ENCODE measurements at regions of chr7 and their contacts with region 1.

Region 1: GRCh38 chr7:87219545-87220025 is at the start of gene TMEM243:
- DNase-seq: peak; percentile 88
- H3K4me3 ChIP-seq: peak within 1 kb of the TSS; percentile 95 to 99
- H3K27ac ChIP-seq: peak within 1 kb of the TSS; percentile 61 to 74
- H3K4me1 ChIP-seq: peaks cover 0 to 24% of the 10 kb centered on the region in 2 experiments; a peak in 2 of 4 replicates
- H3K27me3 ChIP-seq: no peaks in the 10 kb centered on the region
- CTCF ChIP-seq: peak; percentile 40
- EP300 ChIP-seq: 0 out of 4 replicates have a peak, but pooled peaks of 1 of the 2 experiments have one; percentile 6
- RAD21 ChIP-seq: no peak
- polyA plus RNA-seq, gene TMEM243: 31.1 and 36.5 TPM in 2 replicates

Region 2: DNA sequence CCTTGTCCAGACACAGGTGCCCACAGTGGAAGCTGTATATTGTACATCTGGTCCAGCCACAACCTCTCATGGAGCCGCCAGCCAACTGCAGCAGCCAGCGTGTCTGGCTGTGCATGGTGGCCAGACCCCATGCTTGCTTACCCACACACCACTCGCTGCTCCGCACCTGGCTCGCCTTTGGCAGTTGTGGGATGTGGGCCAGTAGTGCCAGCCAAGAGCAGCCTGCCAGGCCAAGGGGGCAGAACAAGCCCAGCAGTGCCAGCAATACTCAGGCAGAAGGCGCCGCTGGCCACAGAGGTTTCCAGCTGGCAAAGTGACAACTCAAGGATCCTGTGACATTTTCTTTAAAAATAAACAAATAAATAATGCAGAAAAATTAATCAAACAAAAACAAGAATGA is 11.7 kb after region 1 on chr7:
- CTCF ChIA-PET with region 1: interaction called, 15 read pairs
- POLR2A ChIA-PET with region 1: interaction called, 8 read pairs
- DNase-seq: peak; percentile 35
- H3K4me3 ChIP-seq: no peak overlapping the region
- H3K27ac ChIP-seq: no peak overlapping the region
- H3K4me1 ChIP-seq: peaks cover 0 to 16% of the 10 kb centered on the region in 2 experiments; a peak in 1 of 4 replicates
- H3K27me3 ChIP-seq: no peaks in the 10 kb centered on the region; the same call in 1 of the 2 replicates
- CTCF ChIP-seq: no peak
- EP300 ChIP-seq: no peak; a peak in 1 of 4 replicates
- RAD21 ChIP-seq: no peak

Region 3: DNA sequence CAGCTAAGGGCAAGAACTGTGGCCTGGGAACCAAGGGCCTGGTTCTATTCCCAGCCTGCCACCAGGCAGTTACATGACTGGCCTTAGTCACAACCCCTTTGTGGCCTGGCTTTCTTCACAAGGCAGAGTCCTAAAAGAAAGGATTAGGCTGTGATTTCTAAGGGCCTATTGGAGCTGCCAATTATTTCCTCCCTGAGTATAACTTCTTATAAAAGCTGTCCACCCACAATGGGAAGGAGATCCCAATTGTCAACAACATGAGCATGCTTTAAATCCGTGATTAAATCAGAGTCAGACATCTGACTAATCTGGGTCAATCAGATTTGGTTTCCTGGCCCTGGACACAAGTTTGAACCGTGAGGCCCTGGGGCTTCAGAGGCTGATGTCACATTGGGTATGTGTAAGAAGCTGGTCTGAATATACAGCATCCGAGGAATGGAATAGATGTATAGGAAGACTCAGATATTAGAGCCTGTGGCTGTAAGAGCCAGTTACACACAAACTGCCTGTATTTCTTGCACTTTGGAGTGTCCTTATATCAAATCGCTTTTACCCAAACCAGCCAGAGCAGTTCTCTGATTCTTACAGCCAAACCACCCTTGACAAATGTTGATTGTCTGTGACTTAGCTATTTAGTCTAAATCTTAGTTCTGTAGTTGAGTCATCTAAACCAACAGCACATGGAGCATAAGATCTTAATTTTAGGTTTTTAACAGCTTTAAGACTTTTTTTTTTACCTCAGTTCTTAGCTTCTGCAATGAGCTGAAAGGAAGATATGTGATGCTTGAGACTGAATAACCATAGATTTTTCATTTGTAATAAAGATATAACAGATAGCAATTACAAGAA is 194.6 kb after region 1 on chr7:
- CTCF ChIA-PET with region 1: no interaction called
- POLR2A ChIA-PET with region 1: no interaction called
- DNase-seq: peak; percentile 33
- H3K4me3 ChIP-seq: no peak overlapping the region
- H3K27ac ChIP-seq: peak overlapping the region; percentile 8 to 36; a peak in 2 of 4 replicates
- H3K4me1 ChIP-seq: peaks cover 8 to 9% of the 10 kb centered on the region in 2 experiments; a peak in 3 of 4 replicates
- H3K27me3 ChIP-seq: no peaks in the 10 kb centered on the region
- CTCF ChIP-seq: no peak
- EP300 ChIP-seq: peak in 1 of 2 experiments; percentile 30; a peak in 1 of 4 replicates
- RAD21 ChIP-seq: no peak; the same call in 1 of the 2 replicates